Activated CD4-positive, alpha-beta memory T cell treated with anti-CD3 and anti-CD28 coated beads for 36 hours (primary cell): ENCODE measurements at regions of chr17 and their contacts with region 1.

Region 1: DNA sequence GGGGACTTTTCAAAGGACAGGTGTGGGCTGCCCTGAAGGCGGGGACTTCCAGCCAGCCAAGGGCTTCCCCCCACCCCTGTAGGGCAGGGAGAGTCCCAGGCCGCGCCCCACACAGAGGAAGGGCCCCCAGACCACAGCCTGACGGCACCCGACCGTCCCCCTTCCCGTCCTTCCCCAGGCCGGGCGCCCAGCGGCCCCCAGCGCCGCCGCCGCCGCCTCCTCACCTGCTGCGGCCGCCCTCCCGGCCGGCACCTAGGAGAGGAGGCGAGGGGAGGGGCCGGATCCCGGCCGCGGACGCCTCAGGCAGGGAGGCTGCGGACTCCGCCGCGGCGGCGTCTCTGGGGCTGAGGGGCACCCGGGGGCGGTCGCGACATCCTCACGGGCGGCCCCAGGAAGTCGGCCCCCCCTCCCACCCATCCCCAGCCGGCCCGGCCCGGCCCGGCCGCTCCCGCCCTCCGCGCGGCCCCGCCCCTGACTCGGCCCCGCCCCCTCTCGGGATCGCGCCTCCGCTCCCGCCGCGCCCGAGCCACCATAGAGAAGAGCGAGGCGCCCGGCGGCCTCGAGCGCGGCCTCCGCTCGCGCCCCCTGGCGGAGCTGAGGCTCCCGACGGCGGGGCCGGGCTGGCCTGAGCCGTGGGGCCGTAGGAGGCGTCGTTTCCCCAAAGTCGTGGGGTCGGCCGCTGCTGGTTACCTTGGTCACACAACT is 25.5 kb upstream of the RFFL start:
- DNase-seq: peak; percentile 93
- H3K4me3 Mint-ChIP-seq: peak overlapping the region; percentile 91
- H3K27ac Mint-ChIP-seq: peak overlapping the region; percentile 96
- H3K4me1 Mint-ChIP-seq: peaks cover 43% of the 10 kb centered on the region
- H3K27me3 Mint-ChIP-seq: no peaks in the 10 kb centered on the region

Region 2: GRCh38 chr17:34998205-34998604 is 90.8 kb before region 1 on chr17:
- CTCF ChIA-PET with region 1: interaction called, 19 read pairs
- POLR2A ChIA-PET with region 1: interaction called, 4 read pairs
- intact Hi-C with region 1: loop called (anchors 1 kb)
- DNase-seq: peak; percentile 90
- H3K4me3 Mint-ChIP-seq: no peak overlapping the region
- H3K27ac Mint-ChIP-seq: peak overlapping the region; percentile 5
- H3K4me1 Mint-ChIP-seq: peaks cover 5% of the 10 kb centered on the region
- H3K27me3 Mint-ChIP-seq: no peaks in the 10 kb centered on the region

Region 3: GRCh38 chr17:35046740-35047283 is 42.2 kb before region 1 on chr17:
- CTCF ChIA-PET with region 1: interaction called, 9 read pairs
- POLR2A ChIA-PET with region 1: interaction called, 8 read pairs
- intact Hi-C with region 1: loop called (anchors 1 kb)
- DNase-seq: peak; percentile 82
- H3K4me3 Mint-ChIP-seq: peak overlapping the region; percentile 72
- H3K27ac Mint-ChIP-seq: peak overlapping the region; percentile 94
- H3K4me1 Mint-ChIP-seq: peaks cover 69% of the 10 kb centered on the region
- H3K27me3 Mint-ChIP-seq: no peaks in the 10 kb centered on the region

Region 4: DNA sequence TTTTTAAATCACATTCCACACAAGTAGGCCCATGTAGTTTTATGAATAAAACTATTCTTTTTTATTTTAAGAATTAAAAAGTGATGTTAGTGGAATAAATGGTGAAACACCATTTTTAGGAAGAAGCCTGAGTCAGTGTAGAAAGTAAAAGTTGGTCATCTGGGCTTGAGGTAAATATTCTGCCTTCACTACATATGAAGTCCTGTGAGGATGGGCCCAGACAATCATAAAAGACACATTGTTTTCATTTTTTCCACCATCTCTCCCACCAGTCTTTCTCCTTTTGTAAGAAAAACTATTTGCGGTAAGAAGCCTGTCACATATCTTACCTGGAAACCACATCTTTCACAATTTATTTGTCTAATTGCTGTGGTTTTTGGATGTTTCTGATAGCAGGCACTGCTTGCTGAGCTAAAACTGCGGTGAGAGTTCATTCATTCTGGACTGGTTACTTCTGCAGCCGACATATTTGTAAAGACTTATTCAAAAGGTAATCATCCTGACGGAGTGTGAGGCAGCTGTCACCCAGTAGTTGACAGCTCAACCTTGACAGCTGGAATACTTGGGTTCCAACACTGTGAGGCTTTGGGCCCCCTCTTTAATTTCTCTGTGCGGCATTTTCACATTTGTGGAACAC is 14.9 kb before region 1 on chr17:
- CTCF ChIA-PET with region 1: interaction called, 10 read pairs
- POLR2A ChIA-PET with region 1: interaction called, 5 read pairs
- intact Hi-C with region 1: loop called (anchors 1 kb)
- DNase-seq: peak; percentile 35
- H3K4me3 Mint-ChIP-seq: peak overlapping the region; percentile 44
- H3K27ac Mint-ChIP-seq: peak overlapping the region; percentile 85
- H3K4me1 Mint-ChIP-seq: peaks cover 69% of the 10 kb centered on the region
- H3K27me3 Mint-ChIP-seq: no peaks in the 10 kb centered on the region

Region 5: DNA sequence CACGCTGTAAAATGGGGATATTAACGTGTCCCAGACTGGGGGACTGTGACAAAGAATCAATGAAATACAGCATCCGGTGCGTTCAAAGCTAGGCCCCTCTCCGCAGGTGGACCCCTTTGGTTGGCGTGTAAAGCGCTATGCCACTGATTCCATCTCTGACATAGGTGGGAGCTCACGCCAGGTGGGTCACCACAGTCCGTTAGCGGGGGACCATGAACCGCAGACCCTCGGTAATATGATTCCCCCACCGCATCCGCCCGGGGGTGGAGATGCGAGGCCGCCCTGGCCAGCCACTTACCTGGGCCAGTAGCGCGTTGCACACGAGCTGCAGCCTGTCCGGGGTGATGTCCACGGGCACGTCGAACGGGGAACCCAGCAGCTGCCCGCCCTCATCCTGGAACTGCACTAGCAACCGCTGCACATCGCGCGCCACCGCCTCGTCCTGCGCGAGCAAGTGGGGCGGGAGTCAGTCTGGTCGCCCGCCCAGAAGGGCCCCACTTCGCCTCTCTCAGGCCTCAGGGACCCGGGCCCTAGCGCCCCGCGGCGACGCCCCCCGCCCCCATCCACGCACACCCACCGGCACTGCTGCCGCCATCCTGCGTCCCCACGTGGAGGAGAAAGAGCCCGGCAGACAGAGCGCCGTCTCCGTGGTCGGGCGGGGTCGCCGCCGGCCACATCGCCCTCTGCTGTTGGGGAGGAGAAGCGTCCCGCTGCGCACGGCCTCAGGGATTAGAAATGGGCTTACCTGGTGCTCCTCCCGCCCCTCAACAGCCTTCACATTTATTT is 52.8 kb after region 1 on chr17 and contains the start of gene NLE1:
- CTCF ChIA-PET with region 1: no interaction called
- POLR2A ChIA-PET with region 1: no interaction called
- intact Hi-C with region 1: loop called (anchors 1 kb)
- DNase-seq: peak; percentile 93
- H3K4me3 Mint-ChIP-seq: peak within 1 kb of the TSS; percentile 79
- H3K27ac Mint-ChIP-seq: peak within 1 kb of the TSS; percentile 74
- H3K4me1 Mint-ChIP-seq: peaks cover 16% of the 10 kb centered on the region
- H3K27me3 Mint-ChIP-seq: no peaks in the 10 kb centered on the region
- total RNA-seq, gene NLE1: 29.9 to 31.4 TPM

Region 6: GRCh38 chr17:35160354-35161201 is 71.5 kb after region 1 on chr17:
- CTCF ChIA-PET with region 1: no interaction called
- POLR2A ChIA-PET with region 1: no interaction called
- intact Hi-C with region 1: no loop called
- DNase-seq: peak; percentile 59
- H3K4me3 Mint-ChIP-seq: peak overlapping the region; percentile 28
- H3K27ac Mint-ChIP-seq: peak overlapping the region; percentile 46
- H3K4me1 Mint-ChIP-seq: peaks cover 50% of the 10 kb centered on the region
- H3K27me3 Mint-ChIP-seq: no peaks in the 10 kb centered on the region